Vagina (tissue), 2 donors: ENCODE measurements at regions of chr7 and their contacts with region 1.

Region 1: DNA sequence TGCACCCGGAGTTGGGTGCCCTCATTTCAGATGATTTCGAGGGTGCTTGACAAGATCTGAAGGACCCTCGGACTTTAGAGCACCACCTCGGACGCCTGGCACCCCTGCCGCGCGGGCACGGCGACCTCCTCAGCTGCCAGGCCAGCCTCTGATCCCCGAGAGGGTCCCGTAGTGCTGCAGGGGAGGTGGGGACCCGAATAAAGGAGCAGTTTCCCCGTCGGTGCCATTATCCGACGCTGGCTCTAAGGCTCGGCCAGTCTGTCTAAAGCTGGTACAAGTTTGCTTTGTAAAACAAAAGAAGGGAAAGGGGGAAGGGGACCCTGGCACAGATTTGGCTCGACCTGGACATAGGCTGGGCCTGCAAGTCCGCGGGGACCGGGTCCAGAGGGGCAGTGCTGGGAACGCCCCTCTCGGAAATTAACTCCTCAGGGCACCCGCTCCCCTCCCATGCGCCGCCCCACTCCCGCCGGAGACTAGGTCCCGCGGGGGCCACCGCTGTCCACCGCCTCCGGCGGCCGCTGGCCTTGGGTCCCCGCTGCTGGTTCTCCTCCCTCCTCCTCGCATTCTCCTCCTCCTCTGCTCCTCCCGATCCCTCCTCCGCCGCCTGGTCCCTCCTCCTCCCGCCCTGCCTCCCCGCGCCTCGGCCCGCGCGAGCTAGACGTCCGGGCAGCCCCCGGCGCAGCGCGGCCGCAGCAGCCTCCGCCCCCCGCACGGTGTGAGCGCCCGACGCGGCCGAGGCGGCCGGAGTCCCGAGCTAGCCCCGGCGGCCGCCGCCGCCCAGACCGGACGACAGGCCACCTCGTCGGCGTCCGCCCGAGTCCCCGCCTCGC is at the start of gene EGFR:
- DNase-seq: no peak
- H3K4me3 ChIP-seq: peak within 1 kb of the TSS; percentile 57 to 98
- H3K27ac ChIP-seq: peak within 1 kb of the TSS; percentile 89
- H3K4me1 ChIP-seq: peaks cover 40% of the 10 kb centered on the region
- H3K27me3 ChIP-seq: no peaks in the 10 kb centered on the region
- CTCF ChIP-seq: no peak
- POLR2A ChIP-seq: peak in 1 of 2 donors; percentile 98
- total RNA-seq, gene EGFR: 130 TPM

Region 2: GRCh38 chr7:54839538-54840213 is 178.9 kb before region 1 on chr7:
- intact Hi-C with region 1: loop called (anchors 5 kb)
- DNase-seq: no peak
- H3K4me3 ChIP-seq: no peak overlapping the region
- H3K27ac ChIP-seq: peak overlapping the region; percentile 64
- H3K4me1 ChIP-seq: peaks cover 28% of the 10 kb centered on the region
- H3K27me3 ChIP-seq: no peaks in the 10 kb centered on the region
- CTCF ChIP-seq: peak in 2 of 3 experiments; percentile 20 to 28
- POLR2A ChIP-seq: no peak

Region 3: DNA sequence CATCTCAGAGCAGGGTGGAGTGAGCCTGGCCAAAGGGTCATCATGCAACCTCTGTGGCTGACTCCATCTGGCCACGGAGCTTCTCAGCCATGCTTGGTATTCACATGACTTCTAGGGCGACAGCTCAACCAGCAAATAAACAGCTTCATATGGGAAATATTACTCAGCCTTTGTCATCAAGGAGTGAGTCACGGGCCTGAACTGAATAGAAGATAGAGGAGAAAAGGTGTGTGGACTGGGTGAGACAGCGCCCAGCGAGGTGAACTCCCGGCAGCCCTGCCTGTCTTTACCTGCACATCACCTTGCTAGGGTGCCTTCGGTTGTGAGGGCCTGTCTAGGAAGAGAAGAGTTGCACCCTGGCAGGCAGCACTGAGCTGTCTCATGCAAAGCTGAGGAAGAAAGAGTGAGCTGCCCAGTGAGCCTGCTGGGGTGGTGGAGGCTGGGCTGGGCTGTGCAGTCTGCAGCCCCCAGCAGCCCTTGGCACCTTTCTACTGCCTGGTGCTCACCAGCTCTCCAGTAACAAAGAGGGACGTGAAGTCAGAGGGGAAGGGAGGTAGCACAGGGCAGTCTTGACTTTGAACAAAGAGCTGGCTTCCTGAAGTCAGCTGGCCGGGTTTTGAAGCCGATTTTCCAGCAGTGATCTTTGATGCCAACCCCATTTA is 114.4 kb after region 1 on chr7:
- intact Hi-C with region 1: loop called (anchors 5 kb)
- DNase-seq: peak in 1 of 2 donors; percentile 95
- H3K4me3 ChIP-seq: no peak overlapping the region
- H3K27ac ChIP-seq: peak overlapping the region; percentile 91
- H3K4me1 ChIP-seq: peaks cover 76% of the 10 kb centered on the region
- H3K27me3 ChIP-seq: no peaks in the 10 kb centered on the region
- CTCF ChIP-seq: no peak
- POLR2A ChIP-seq: no peak